CD4-positive, alpha-beta memory T cell (primary cell): ENCODE measurements at regions of chr7 and their contacts with region 1.

Region 1: GRCh38 chr7:74206589-74207120 is 3.2 kb upstream of the LAT2 start:
- DNase-seq: peak; percentile 58 to 77 (median 68)
- H3K4me3 ChIP-seq: no peak overlapping the region
- H3K4me3 Mint-ChIP-seq: peak overlapping the region in 6 of 8 donors; percentile 21 to 65 (median 54)
- H3K27ac ChIP-seq: no peak overlapping the region
- H3K27ac Mint-ChIP-seq: peak overlapping the region in 1 of 7 donors; percentile 73
- H3K4me1 ChIP-seq: peaks cover 16% of the 10 kb centered on the region
- H3K4me1 Mint-ChIP-seq: peaks cover 7 to 25% (median 13%) of the 10 kb centered on the region in 4 donors
- H3K27me3 ChIP-seq: no peaks in the 10 kb centered on the region
- H3K27me3 Mint-ChIP-seq: no peaks in the 10 kb centered on the region

Region 2: DNA sequence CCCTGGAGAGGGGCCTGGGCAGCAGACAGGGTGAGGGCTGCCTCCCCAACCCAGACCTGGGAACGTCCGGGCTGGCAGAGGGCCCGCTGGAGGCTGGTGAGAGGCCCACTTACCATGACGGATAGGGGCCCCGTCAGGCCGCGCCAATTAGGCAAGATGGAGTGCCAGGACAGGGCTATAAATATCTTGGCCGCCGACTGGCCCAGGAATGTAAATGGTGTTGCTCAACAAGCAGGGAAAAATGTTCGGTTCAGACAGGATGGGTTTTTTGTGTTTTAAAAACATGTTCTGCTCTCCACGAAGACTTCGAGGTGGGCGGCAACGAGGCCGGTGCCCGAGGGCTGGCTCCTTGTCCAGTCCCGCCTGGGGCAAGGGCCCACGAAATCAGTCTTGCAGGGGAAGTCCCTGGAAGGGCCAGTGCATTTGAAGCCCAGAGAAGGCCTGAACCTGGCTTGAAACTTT is 214.5 kb before region 1 on chr7:
- CTCF ChIA-PET with region 1: no interaction called
- POLR2A ChIA-PET with region 1: no interaction called
- intact Hi-C with region 1: no loop called
- DNase-seq: no peak
- H3K4me3 ChIP-seq: no peak overlapping the region
- H3K4me3 Mint-ChIP-seq: no peak overlapping the region
- H3K27ac ChIP-seq: no peak overlapping the region
- H3K27ac Mint-ChIP-seq: no peak overlapping the region
- H3K4me1 ChIP-seq: no peaks in the 10 kb centered on the region
- H3K4me1 Mint-ChIP-seq: no peaks in the 10 kb centered on the region
- H3K27me3 ChIP-seq: no peaks in the 10 kb centered on the region
- H3K27me3 Mint-ChIP-seq: peaks cover 3 to 8% of the 10 kb centered on the region in 2 donors

Region 3: DNA sequence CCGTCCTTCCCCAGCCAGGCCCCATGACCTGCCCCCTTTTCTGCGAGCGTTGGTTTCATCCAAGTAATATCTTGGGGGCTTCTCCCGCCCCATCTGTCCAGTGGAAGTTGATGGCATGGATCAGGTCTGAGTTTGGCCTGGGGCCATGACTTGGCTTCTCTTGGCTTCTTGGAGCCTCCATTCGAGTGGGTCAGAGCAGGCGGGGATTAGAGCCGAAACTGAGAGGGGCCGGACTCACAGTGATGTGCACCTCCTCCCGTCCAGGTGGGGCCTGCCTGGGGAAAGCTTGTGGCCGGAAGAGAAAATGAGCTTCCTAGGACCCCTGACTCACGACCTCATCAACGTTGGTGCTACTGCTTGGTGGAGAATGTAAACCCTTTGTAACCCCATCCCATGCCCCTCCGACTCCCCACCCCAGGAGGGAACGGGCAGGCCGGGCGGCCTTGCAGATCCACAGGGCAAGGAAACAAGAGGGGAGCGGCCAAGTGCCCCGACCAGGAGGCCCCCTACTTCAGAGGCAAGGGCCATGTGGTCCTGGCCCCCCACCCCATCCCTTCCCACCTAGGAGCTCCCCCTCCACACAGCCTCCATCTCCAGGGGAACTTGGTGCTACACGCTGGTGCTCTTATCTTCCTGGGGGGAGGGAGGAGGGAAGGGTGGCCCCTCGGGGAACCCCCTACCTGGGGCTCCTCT is 138.1 kb before region 1 on chr7:
- CTCF ChIA-PET with region 1: interaction called, 16 read pairs
- POLR2A ChIA-PET with region 1: no interaction called
- intact Hi-C with region 1: loop called (anchors 1 kb)
- DNase-seq: no peak
- H3K4me3 ChIP-seq: no peak overlapping the region
- H3K4me3 Mint-ChIP-seq: no peak overlapping the region
- H3K27ac ChIP-seq: no peak overlapping the region
- H3K27ac Mint-ChIP-seq: peak overlapping the region in 1 of 7 donors; percentile 55
- H3K4me1 ChIP-seq: no peaks in the 10 kb centered on the region
- H3K4me1 Mint-ChIP-seq: peaks cover 0 to under 1% (median 0%) of the 10 kb centered on the region in 4 donors
- H3K27me3 ChIP-seq: no peaks in the 10 kb centered on the region
- H3K27me3 Mint-ChIP-seq: no peaks in the 10 kb centered on the region

Region 4: GRCh38 chr7:74183613-74184450 is 22.8 kb before region 1 on chr7:
- CTCF ChIA-PET with region 1: interaction called, 20 read pairs
- POLR2A ChIA-PET with region 1: no interaction called
- intact Hi-C with region 1: no loop called
- DNase-seq: no peak
- H3K4me3 ChIP-seq: no peak overlapping the region
- H3K4me3 Mint-ChIP-seq: peak overlapping the region in 7 of 8 donors; percentile 2 to 74 (median 15)
- H3K27ac ChIP-seq: no peak overlapping the region
- H3K27ac Mint-ChIP-seq: peak overlapping the region in 6 of 7 donors; percentile 5 to 89 (median 66)
- H3K4me1 ChIP-seq: peaks cover 82% of the 10 kb centered on the region
- H3K4me1 Mint-ChIP-seq: peaks cover 60 to 98% (median 78%) of the 10 kb centered on the region in 4 donors
- H3K27me3 ChIP-seq: no peaks in the 10 kb centered on the region
- H3K27me3 Mint-ChIP-seq: no peaks in the 10 kb centered on the region

Region 5: DNA sequence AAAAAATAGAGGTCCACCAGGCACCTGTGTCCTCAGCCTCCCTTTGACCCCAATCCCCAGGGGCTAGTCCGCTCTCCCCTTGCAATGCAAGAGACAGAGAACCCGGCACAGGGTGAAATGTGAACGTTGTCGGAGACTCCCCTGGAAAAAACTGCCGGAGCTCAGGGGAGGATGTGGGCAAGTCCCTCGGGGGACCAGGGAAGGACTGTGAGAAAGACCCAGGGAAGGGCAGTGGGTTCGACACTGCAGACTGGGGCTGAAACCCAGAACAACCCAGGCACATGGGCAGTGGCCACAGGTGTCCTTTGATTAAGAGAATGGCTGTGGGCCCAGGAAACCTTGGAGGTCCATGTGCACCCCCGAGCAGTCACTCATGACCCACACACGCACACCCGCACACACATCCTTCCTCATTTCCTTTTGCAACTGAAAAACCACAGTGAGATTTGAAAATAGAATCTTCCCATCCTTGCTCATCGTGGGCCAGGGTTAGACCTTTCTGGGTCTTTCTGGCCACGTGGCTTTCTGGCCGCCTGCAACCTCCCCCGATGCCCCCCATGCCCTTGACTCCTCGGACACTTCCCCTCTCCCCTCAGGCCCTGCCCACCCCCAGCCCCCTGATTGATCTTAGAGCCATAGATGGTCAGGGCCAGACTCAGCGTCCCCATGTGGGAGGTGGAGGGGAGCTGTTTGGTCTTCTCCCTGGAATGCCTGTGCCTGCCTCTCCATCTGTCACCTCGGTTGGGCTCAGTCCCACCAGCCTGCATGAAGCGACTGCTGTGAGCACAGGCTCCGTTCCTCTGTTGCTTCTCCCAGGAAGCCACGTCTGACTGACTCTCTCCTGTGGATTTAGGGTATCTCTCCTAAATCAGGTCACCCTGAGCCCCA is 11.0 kb after region 1 on chr7:
- CTCF ChIA-PET with region 1: interaction called, 14 read pairs
- POLR2A ChIA-PET with region 1: interaction called, 3 read pairs
- intact Hi-C with region 1: no loop called
- DNase-seq: no peak
- H3K4me3 ChIP-seq: no peak overlapping the region
- H3K4me3 Mint-ChIP-seq: peak overlapping the region; percentile 20 to 66 (median 56)
- H3K27ac ChIP-seq: no peak overlapping the region
- H3K27ac Mint-ChIP-seq: peak overlapping the region in 5 of 7 donors; percentile 15 to 57 (median 50)
- H3K4me1 ChIP-seq: peaks cover 9% of the 10 kb centered on the region
- H3K4me1 Mint-ChIP-seq: peaks cover 9 to 19% (median 13%) of the 10 kb centered on the region in 4 donors
- H3K27me3 ChIP-seq: no peaks in the 10 kb centered on the region
- H3K27me3 Mint-ChIP-seq: no peaks in the 10 kb centered on the region

Region 6: GRCh38 chr7:74401137-74401859 is 194.6 kb after region 1 on chr7:
- CTCF ChIA-PET with region 1: interaction called, 174 read pairs
- POLR2A ChIA-PET with region 1: interaction called, 11 read pairs
- intact Hi-C with region 1: no loop called
- DNase-seq: peak; percentile 57 to 71 (median 61)
- H3K4me3 ChIP-seq: no peak overlapping the region
- H3K4me3 Mint-ChIP-seq: no peak overlapping the region
- H3K27ac ChIP-seq: no peak overlapping the region
- H3K27ac Mint-ChIP-seq: no peak overlapping the region
- H3K4me1 ChIP-seq: no peaks in the 10 kb centered on the region
- H3K4me1 Mint-ChIP-seq: peaks cover 0 to 2% (median 0%) of the 10 kb centered on the region in 4 donors
- H3K27me3 ChIP-seq: no peaks in the 10 kb centered on the region
- H3K27me3 Mint-ChIP-seq: no peaks in the 10 kb centered on the region